ENCODE measurements at regions of chrX and their contacts with region 1.

Region 1: DNA sequence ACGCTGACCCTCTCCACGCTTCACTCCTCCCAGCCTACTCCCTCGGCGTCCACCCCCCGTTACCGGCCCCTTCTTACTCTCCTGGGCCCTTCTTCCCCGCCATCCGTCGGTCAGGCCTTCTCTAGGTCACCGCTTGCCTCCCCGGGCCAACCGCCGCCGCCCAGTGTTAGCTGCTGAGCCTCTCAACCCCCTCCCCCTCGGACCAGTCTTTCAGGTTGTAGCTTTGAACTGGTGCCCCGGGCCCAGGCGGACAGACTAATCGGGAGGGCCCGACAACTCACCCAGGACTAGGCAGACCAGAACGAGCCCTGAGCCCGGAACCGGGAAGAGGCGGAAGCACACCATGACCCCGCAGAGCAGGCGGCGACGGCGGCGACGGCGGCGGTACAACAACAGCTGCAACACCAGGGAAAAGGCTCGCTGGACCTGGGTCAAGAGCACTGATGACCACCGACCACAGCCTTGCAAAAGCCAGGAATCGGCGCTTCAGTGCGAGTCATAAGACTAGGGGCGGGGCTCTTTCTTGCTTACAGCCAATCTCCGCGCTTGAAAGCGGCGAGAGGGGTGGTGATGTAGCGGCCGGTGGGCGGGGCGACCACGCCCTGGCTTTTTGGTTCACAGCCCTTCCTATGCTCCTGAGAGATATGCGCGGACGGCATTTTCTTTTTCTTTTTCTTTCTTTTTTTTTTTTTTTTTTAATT is at the start of gene LAMP2:
- DNase-seq: peak; percentile 86
- ATAC-seq: peak; percentile 97
- H3K4me3 ChIP-seq: peak within 1 kb of the TSS; percentile 64
- H3K27ac ChIP-seq: peak within 1 kb of the TSS; percentile 48
- H3K4me1 ChIP-seq: no peaks in the 10 kb centered on the region
- H3K27me3 ChIP-seq: peaks cover 2% of the 10 kb centered on the region; the same call in 1 of the 2 replicates
- CTCF ChIP-seq: no peak
- POLR2A ChIP-seq: peak; percentile 85
- RAD21 ChIP-seq: no peak
- total RNA-seq, gene LAMP2: 114 and 129 TPM in 2 replicates

Region 2: DNA sequence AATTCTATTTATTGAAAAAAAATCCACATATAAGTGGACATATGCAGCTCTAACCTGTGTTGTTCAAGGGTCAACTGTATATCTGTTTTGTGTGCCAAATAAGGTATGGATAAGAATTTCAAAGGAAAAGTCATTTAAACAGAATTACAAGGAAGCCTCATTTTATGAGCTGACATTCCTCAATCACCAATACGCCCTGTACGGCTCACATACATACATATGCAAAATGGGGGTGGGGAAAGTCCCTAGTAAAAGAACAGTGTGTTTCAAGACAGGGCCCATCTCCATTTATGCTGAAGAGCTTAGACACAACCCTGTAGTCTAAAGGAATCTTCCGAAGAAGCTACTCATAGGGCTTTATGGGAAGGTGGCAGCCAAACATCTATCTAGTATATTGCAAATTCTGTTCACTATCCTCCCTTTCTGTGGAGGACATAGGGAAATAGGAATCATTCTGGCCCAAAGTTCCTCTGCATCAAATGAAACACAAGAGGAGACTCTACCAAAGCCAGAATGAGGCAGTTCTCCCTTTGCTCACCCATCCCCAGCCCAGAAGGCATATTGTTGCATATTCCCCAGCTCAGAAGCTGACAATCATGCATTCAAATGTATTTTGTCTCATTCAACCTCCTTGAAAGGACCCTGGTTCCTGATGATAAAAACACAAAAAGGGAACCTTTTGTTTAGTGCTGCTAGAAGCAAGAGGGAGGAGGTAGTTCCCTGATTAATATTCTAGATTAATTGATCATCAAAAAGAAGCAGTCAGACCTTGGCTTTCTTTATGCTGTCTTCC is 232.1 kb before region 1 on chrX:
- CTCF ChIA-PET with region 1: no interaction called
- POLR2A ChIA-PET with region 1: no interaction called
- dilution Hi-C with region 1: no loop called
- in situ Hi-C with region 1: no loop called
- intact Hi-C with region 1: no loop called
- DNase-seq: no peak
- ATAC-seq: no peak
- H3K4me3 ChIP-seq: no peak overlapping the region
- H3K27ac ChIP-seq: no peak overlapping the region
- H3K4me1 ChIP-seq: no peaks in the 10 kb centered on the region
- H3K27me3 ChIP-seq: no peaks in the 10 kb centered on the region; the same call in 1 of the 2 replicates
- CTCF ChIP-seq: no peak
- POLR2A ChIP-seq: no peak
- RAD21 ChIP-seq: no peak

Region 3: DNA sequence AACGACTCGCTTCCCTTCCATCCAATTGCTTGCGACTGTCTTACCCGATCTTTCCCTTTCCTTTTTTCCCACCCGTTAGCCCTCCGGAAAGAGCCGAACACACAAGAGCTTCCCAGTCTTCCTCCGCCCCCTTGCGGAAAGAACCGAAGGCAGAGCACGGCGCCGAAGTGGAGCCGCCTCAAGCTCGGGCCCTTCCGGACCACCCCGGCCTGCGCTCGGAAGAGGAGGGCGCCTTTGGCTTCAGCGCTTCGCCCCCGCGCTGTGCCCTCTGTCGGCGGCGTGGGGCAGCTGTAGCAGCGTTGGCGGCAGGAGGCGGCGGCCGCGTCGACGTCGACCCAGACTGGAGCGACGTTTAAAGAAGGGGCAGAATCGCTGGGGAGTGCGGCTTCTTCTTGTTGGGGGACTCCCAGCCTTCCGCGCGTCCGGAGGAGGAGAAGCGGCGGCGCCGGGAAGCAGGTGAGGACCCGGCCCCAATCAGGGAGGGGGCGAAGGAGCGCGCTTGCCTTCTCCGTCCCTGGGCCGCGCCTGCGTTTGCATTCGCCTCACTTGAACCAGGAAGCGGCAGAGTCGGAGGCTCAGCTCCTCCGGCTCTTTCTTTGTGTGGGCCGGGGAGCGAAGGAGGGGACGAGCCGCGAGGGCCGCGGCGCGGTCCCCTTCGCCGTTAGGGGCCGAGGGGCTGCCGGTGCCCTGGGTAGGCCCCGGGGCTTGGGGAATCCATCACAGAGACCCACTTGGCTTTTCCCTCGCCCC is 218.3 kb before region 1 on chrX and contains the start of gene ZBTB33:
- CTCF ChIA-PET with region 1: no interaction called
- POLR2A ChIA-PET with region 1: no interaction called
- dilution Hi-C with region 1: no loop called
- in situ Hi-C with region 1: no loop called
- intact Hi-C with region 1: loop called (anchors 5 kb)
- DNase-seq: peak; percentile 92
- ATAC-seq: peak; percentile 99
- H3K4me3 ChIP-seq: peak within 1 kb of the TSS; percentile 95
- H3K27ac ChIP-seq: peak within 1 kb of the TSS; percentile 82
- H3K4me1 ChIP-seq: no peaks in the 10 kb centered on the region
- H3K27me3 ChIP-seq: 0 out of 2 replicates have a peak, but pooled peaks cover 2% of the 10 kb centered on the region
- CTCF ChIP-seq: peak; percentile 55
- POLR2A ChIP-seq: peak; percentile 67
- RAD21 ChIP-seq: no peak
- total RNA-seq, gene ZBTB33: 16.3 and 20.8 TPM in 2 replicates

Region 4: GRCh38 chrX:120365320-120365719 is 103.7 kb before region 1 on chrX:
- CTCF ChIA-PET with region 1: no interaction called
- POLR2A ChIA-PET with region 1: no interaction called
- dilution Hi-C with region 1: no loop called
- in situ Hi-C with region 1: no loop called
- intact Hi-C with region 1: loop called (anchors 5 kb)
- DNase-seq: no peak
- ATAC-seq: no peak
- H3K4me3 ChIP-seq: no peak overlapping the region
- H3K27ac ChIP-seq: no peak overlapping the region
- H3K4me1 ChIP-seq: no peaks in the 10 kb centered on the region
- H3K27me3 ChIP-seq: no peaks in the 10 kb centered on the region; the same call in 1 of the 2 replicates
- CTCF ChIP-seq: peak; percentile 28; the same call in 1 of the 2 replicates
- POLR2A ChIP-seq: no peak
- RAD21 ChIP-seq: no peak